Activated CD4-positive, alpha-beta T cell treated with anti-CD3 and anti-CD28 coated beads for 36 hours (primary cell): ENCODE measurements at regions of chr7 and their contacts with region 1.

Region 1: DNA sequence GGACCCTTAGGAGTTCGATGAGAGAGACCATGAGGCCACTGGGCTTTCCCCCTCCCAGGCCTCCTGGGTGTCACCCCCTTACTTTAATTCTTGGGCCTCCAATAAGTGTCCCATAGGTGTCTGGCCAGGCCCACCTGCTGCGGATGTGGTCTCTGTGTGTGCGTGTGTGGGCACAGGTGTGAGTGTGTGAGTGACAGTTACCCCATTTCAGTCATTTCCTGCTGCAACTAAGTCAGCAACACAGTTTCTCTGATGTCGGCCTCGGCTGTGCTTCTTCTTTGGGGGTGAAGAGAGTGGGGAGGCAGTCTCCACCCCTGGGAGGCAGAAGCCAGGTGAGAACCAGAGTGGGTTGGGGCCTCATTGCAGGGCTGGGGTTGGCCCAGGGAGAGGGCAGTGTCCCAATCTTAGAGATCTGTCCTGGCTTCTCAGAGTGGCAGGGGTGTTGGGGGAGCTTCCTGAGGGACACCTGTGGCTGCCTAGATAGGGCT is 1.5 kb downstream of the PVRIG start:
- DNase-seq: peak; percentile 81
- ATAC-seq: peak; percentile 57
- H3K4me3 Mint-ChIP-seq: peak overlapping the region; percentile 96
- H3K27ac Mint-ChIP-seq: peak overlapping the region; percentile 90
- H3K4me1 Mint-ChIP-seq: peaks cover 47% of the 10 kb centered on the region
- H3K27me3 Mint-ChIP-seq: no peaks in the 10 kb centered on the region

Region 2: GRCh38 chr7:100034871-100035510 is 186.3 kb before region 1 on chr7:
- CTCF ChIA-PET with region 1: no interaction called
- POLR2A ChIA-PET with region 1: no interaction called
- intact Hi-C with region 1: no loop called
- DNase-seq: no peak
- ATAC-seq: no peak
- H3K4me3 Mint-ChIP-seq: no peak overlapping the region
- H3K27ac Mint-ChIP-seq: no peak overlapping the region
- H3K4me1 Mint-ChIP-seq: no peaks in the 10 kb centered on the region
- H3K27me3 Mint-ChIP-seq: no peaks in the 10 kb centered on the region

Region 3: GRCh38 chr7:100190048-100190711 is 31.1 kb before region 1 on chr7:
- CTCF ChIA-PET with region 1: interaction called, 20 read pairs
- POLR2A ChIA-PET with region 1: no interaction called
- intact Hi-C with region 1: loop called (anchors 1 to 2 kb)
- DNase-seq: no peak
- ATAC-seq: peak; percentile 91
- H3K4me3 Mint-ChIP-seq: no peak overlapping the region
- H3K27ac Mint-ChIP-seq: peak overlapping the region; percentile 81
- H3K4me1 Mint-ChIP-seq: peaks cover 38% of the 10 kb centered on the region
- H3K27me3 Mint-ChIP-seq: no peaks in the 10 kb centered on the region

Region 4: GRCh38 chr7:100200693-100201092 is 20.6 kb before region 1 on chr7:
- CTCF ChIA-PET with region 1: no interaction called
- POLR2A ChIA-PET with region 1: no interaction called
- intact Hi-C with region 1: no loop called
- DNase-seq: no peak
- ATAC-seq: no peak
- H3K4me3 Mint-ChIP-seq: no peak overlapping the region
- H3K27ac Mint-ChIP-seq: no peak overlapping the region
- H3K4me1 Mint-ChIP-seq: peaks cover 10% of the 10 kb centered on the region
- H3K27me3 Mint-ChIP-seq: no peaks in the 10 kb centered on the region

Region 5: GRCh38 chr7:100266576-100267354 is 45.5 kb after region 1 on chr7:
- CTCF ChIA-PET with region 1: no interaction called
- POLR2A ChIA-PET with region 1: no interaction called
- intact Hi-C with region 1: no loop called
- DNase-seq: no peak
- ATAC-seq: no peak
- H3K4me3 Mint-ChIP-seq: no peak overlapping the region
- H3K27ac Mint-ChIP-seq: no peak overlapping the region
- H3K4me1 Mint-ChIP-seq: peaks cover 7% of the 10 kb centered on the region
- H3K27me3 Mint-ChIP-seq: no peaks in the 10 kb centered on the region